PC-9 (cell line): ENCODE measurements at regions of chr10 and their contacts with region 1.

Region 1: DNA sequence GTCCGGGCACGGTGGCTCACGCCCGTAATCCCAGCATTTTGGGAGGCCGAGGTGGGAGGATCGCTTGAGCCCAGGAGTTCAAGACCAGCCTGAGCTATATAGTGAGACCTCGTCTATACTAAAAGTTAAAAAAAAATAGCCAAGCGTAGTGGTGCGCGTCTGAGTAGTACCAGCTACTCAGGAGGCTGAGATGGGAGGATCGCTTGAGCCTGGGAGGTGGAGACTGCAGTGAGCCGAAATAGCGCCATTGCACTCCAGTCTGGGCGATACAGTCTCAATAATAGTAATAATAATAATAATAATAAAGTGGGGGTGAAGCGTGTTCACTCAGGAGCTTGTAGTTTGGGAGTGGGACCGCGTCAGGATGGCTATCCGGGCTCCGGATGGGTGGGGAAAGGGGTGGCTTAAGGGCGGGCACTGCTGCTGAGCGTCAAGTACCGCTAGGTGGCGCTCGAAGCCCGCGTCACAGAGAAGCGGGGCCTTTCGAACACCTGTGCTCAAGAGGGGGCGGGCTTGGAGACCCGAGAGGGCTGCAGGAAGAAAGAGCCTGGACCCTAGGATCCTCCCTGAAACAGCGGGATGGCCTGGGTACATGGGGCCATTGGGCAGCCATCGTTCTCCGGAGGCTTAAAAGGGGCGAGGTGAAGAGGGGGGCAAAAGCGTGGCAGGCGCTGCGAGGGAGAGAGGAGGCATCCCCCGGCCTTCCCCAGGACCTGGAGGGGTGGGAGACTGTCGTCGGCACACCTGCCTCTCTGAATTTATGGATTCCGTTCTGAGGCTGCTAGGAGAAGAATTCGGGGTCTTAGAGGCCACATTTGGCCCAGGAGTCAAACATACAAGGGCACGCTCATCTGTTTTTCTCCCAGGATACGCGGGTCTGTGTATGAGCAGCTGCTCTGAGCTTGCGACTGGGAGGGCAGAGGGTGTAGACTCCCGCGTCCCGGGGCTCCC is 14.5 kb downstream of the LBX1 start:
- DNase-seq: peak in 1 of 2 experiments; percentile 49
- H3K4me3 ChIP-seq: peak overlapping the region; percentile 53; the same call in 1 of the 2 replicates
- H3K27ac ChIP-seq: no peak overlapping the region
- H3K4me1 ChIP-seq: 0 out of 2 replicates have a peak, but pooled peaks cover 4% of the 10 kb centered on the region
- H3K27me3 ChIP-seq: peaks cover 41% of the 10 kb centered on the region
- CTCF ChIP-seq: peak; percentile 84

Region 2: DNA sequence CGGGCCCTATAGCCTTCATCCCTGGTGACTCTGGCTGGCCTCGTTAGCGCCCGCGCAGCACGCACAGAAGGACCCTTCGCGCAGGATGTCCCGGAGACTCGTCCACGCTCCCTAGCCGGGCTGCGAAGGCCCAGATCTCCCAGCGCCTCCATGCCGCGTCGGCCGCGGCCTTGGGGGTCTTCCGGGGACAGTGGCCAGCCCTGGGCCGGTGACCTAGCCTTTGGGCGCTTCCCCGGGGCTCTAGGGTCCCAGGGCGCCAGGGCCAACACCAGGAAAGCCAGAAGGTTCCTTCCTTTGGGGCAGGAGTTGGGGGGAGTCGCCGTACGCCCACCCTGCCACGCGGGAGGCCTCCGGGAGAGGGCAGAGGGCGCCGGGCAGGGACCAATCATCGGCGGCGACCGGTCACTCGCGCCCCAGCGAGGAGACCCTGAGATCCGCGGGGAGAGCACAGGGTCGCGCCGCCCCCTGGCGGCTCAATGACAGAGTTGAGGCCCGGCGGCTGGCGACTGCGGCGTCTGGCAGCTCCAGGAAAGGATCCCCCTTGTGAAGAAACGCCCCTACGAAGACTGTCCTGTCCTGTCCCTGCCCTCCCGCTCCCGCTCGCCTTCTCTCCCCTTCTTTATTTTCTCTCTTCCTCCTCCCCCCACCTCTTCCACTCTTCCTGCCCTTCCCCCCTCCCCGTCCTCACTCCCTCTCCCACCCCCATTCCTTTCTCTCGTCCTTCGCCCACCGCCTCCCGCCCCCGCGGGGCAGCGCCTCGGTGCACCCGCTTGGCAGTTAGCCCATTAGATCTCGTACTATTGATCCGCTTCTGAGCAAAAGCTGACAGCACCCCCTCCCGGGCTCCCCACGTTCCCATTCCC is 76.8 kb after region 1 on chr10:
- CTCF ChIA-PET with region 1: interaction called, 5 read pairs
- POLR2A ChIA-PET with region 1: no interaction called
- intact Hi-C with region 1: loop called (anchors 5 kb)
- DNase-seq: no peak
- H3K4me3 ChIP-seq: no peak overlapping the region
- H3K27ac ChIP-seq: no peak overlapping the region
- H3K4me1 ChIP-seq: no peaks in the 10 kb centered on the region
- H3K27me3 ChIP-seq: peaks cover 17% of the 10 kb centered on the region
- CTCF ChIP-seq: peak; percentile 44; the same call in 1 of the 2 replicates

Region 3: GRCh38 chr10:101569838-101570766 is 355.4 kb after region 1 on chr10:
- CTCF ChIA-PET with region 1: interaction called, 6 read pairs
- POLR2A ChIA-PET with region 1: no interaction called
- intact Hi-C with region 1: loop called (anchors 1 kb)
- DNase-seq: peak in 1 of 2 experiments; percentile 58
- H3K4me3 ChIP-seq: peak overlapping the region; percentile 68
- H3K27ac ChIP-seq: no peak overlapping the region
- H3K4me1 ChIP-seq: no peaks in the 10 kb centered on the region
- H3K27me3 ChIP-seq: peaks cover 15% of the 10 kb centered on the region
- CTCF ChIP-seq: peak; percentile 78

Region 4: GRCh38 chr10:101782811-101783735 is 568.4 kb after region 1 on chr10 and contains the start of gene NPM3:
- CTCF ChIA-PET with region 1: interaction called, 6 read pairs
- POLR2A ChIA-PET with region 1: no interaction called
- intact Hi-C with region 1: loop called (anchors 2 kb)
- DNase-seq: peak; percentile 56 to 66
- H3K4me3 ChIP-seq: peak within 1 kb of the TSS; percentile 88
- H3K27ac ChIP-seq: no peak within 1 kb of the TSS
- H3K4me1 ChIP-seq: peaks cover 11% of the 10 kb centered on the region; the same call in 1 of the 2 replicates
- H3K27me3 ChIP-seq: no peaks in the 10 kb centered on the region
- CTCF ChIP-seq: no peak
- total RNA-seq, gene NPM3: 36.1 and 43.6 TPM in 2 replicates

Region 5: GRCh38 chr10:102072673-102073527 is 858.2 kb after region 1 on chr10:
- CTCF ChIA-PET with region 1: no interaction called
- POLR2A ChIA-PET with region 1: no interaction called
- intact Hi-C with region 1: loop called (anchors 2 kb)
- DNase-seq: peak in 1 of 2 experiments; percentile 72
- H3K4me3 ChIP-seq: no peak overlapping the region
- H3K27ac ChIP-seq: no peak overlapping the region
- H3K4me1 ChIP-seq: no peaks in the 10 kb centered on the region
- H3K27me3 ChIP-seq: no peaks in the 10 kb centered on the region
- CTCF ChIP-seq: peak; percentile 87